GM23248 (cell line): ENCODE measurements at regions of chr4 and their contacts with region 1.

Region 1: GRCh38 chr4:9762823-9763475 is 18.5 kb upstream of the DRD5 start:
- DNase-seq: peak; percentile 83
- H3K4me3 ChIP-seq: no peak overlapping the region
- H3K27ac ChIP-seq: no peak overlapping the region
- H3K4me1 ChIP-seq: no peaks in the 10 kb centered on the region
- H3K27me3 ChIP-seq: no peaks in the 10 kb centered on the region

Region 2: GRCh38 chr4:10018818-10019461 is 256.0 kb after region 1 on chr4:
- in situ Hi-C with region 1: loop called (anchors 10 kb)
- DNase-seq: peak; percentile 94
- H3K4me3 ChIP-seq: peak overlapping the region; percentile 71
- H3K27ac ChIP-seq: peak overlapping the region; percentile 65
- H3K4me1 ChIP-seq: 0 out of 2 replicates have a peak, but pooled peaks cover 6% of the 10 kb centered on the region
- H3K27me3 ChIP-seq: no peaks in the 10 kb centered on the region

Region 3: DNA sequence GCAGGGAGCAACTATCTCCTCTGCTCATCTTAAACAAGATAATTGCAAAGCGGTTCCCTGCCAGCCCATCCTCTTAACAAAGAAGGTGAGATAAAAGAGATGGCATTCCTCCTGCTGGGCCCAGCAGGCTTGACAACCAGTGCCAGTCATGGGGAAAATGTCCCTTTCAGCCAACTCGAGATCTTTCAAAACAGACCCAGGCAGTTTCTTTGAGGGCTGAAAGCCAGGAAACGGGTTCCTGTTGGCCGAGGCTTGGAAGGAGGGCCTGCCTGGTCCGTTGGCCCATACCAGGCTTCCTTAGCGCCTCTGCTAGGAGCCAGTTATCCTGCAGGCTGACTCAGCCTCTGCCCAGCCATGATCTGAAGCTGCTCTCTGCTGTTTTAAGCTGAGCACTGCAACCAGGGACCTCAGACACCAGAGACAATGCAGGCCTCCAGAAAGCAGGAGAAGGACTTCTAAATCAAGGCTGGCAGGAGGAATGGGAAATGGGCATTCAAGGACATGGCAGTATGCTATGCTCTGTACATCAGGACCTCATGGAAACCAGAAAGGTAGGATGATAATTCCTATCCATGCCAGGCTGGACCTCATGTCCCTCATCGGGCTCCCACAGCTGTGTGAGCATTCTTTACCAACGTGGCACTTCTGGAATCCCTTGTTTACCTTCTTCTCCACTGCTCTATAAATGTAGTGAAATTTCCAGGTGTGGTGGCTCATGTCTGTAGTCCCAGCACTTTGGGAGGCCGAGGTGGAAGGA is 300.8 kb after region 1 on chr4:
- in situ Hi-C with region 1: loop called (anchors 10 kb)
- DNase-seq: peak; percentile 88
- H3K4me3 ChIP-seq: no peak overlapping the region
- H3K27ac ChIP-seq: peak overlapping the region; percentile 17; the same call in 1 of the 2 replicates
- H3K4me1 ChIP-seq: peaks cover 5% of the 10 kb centered on the region; the same call in 1 of the 2 replicates
- H3K27me3 ChIP-seq: no peaks in the 10 kb centered on the region

Region 4: GRCh38 chr4:10186228-10187214 is 423.6 kb after region 1 on chr4:
- in situ Hi-C with region 1: no loop called
- DNase-seq: peak; percentile 73
- H3K4me3 ChIP-seq: no peak overlapping the region
- H3K27ac ChIP-seq: peak overlapping the region; percentile 20
- H3K4me1 ChIP-seq: peaks cover 48% of the 10 kb centered on the region
- H3K27me3 ChIP-seq: no peaks in the 10 kb centered on the region